GM10248 (cell line): ENCODE measurements at regions of chr4 and their contacts with region 1.

Region 1: GRCh38 chr4:139501927-139502899 is 48.3 kb downstream of the RAB33B start:
- DNase-seq: no peak
- CTCF ChIP-seq: no peak

Region 2: DNA sequence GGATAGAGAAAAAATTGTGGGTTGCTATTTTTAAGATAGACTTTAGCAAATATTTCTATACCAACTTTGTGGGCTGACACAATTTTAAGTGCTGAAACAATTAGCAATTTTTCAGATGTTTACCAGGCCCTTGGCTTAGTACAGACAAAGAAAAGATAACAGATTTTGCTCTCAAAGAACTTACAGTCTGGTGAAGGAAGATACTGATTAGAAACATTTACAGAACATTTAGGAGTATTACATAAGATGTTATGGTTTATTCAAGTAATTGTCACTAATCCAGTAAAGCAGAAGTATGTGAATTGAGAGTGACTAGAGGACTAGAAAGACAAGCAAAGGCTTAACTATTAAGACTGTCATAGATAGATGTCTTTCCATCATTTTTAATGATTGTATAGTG is 164.6 kb before region 1 on chr4:
- CTCF ChIA-PET with region 1: no interaction called
- POLR2A ChIA-PET with region 1: no interaction called
- DNase-seq: no peak
- CTCF ChIP-seq: no peak

Region 3: DNA sequence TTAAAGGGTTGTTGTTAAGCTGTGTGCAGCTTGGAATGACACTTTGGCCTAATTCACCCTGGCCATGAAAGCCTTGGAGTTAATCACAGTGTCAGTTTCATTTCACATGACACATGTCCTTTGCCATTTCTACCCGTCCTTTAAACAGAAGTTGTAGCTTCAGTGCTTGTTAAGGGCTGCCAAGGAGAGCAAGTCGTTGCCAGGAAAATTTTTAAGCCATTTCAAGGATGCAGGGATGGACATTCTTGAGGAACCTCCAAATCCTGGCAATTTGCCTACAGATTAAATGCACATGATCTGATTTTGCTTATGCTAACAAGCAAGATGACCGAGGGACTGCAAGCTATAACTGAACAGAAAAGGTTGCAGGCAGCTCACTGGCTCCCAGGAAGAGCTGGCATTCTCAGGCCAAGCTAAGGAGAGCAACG is 13.3 kb after region 1 on chr4:
- CTCF ChIA-PET with region 1: interaction called, 14 read pairs
- POLR2A ChIA-PET with region 1: no interaction called
- DNase-seq: no peak
- CTCF ChIP-seq: no peak

Region 4: GRCh38 chr4:139522457-139522856 is 20.2 kb after region 1 on chr4:
- CTCF ChIA-PET with region 1: interaction called, 20 read pairs
- POLR2A ChIA-PET with region 1: no interaction called
- DNase-seq: no peak
- CTCF ChIP-seq: no peak

Region 5: DNA sequence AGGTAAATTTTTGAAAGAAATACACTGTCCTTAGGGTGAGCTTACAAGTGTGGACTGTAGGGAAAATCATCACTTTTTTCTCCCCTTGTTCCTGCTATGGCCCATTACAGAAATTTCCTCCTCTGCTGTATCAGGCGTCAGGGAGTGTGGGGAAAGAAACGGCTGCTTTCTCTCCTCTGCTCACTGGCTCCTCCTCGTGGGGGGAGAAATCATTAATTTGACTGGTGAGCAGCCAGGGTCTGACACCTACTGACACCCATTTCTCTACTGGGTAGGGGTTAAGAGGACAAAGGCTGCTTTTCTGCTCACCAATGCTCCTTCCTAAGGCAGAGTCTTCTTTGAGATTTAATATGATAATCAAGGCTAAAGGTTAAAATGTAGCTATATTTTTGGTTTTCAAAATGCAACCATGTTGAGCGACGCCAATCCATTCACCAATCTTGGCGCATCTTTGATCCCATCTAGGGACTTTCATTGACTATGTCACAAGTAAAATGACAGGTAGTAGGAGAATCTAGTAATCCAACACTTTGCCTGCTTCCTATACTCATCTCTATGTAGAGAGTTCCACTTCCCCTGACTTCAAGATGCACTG is 28.7 kb after region 1 on chr4:
- CTCF ChIA-PET with region 1: interaction called, 27 read pairs
- POLR2A ChIA-PET with region 1: no interaction called
- DNase-seq: peak; percentile 74
- CTCF ChIP-seq: peak; percentile 60

Region 6: GRCh38 chr4:139715746-139716391 is 213.7 kb after region 1 on chr4:
- CTCF ChIA-PET with region 1: no interaction called
- POLR2A ChIA-PET with region 1: no interaction called
- DNase-seq: no peak
- CTCF ChIP-seq: no peak